ENCODE measurements at regions of chr12 and their contacts with region 1.

Region 1: DNA sequence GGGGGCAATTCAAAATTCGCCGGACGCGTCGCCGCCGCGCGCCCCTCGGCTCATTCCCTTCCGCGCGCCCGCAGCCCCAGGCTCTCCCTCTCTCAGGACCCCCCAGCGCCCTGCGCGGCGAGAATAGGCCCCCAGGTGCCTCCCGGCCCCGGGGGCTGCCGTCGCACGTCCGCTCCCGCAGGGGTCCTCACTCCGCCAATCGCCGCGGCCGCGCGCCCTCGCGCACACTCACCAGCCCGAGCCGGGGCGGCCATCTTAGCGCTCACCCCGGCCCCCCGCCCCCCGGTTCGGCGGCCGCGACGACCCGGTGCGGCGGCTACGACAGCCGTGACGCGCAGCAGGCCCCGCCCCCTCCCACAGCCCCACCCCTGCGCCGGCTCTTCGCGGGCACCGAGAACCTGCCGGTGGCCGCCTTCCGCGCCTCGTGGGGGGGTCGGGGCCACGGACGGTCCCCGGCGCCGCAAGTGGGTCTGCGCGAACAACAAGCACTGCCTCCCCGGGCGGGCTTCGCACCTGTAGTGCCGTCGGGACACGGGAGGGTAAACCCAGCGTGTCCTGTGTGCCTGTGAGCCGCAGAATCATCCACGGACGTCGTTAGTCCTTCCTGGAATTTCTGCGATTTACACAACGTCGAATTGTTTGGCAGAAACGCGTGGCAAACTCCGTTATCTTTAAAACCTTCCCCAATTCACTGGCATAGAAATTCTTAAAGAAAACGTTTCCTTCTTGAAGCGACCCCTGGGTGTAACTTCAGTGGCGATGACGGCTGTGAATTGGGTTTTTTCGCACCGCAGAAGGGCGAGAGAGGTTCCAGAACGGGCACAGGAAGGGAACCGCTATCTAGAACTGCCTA is 2.5 kb downstream of the USP44 start:
- DNase-seq: peak; percentile 87
- ATAC-seq: peak; percentile 91
- H3K4me3 ChIP-seq: peak overlapping the region; percentile 52 to 91 (median 81)
- H3K4me3 Mint-ChIP-seq: peak overlapping the region; percentile 92
- H3K27ac ChIP-seq: peak overlapping the region; percentile 73 to 78
- H3K27ac Mint-ChIP-seq: peak overlapping the region; percentile 85
- H3K4me1 ChIP-seq: peaks cover 12 to 13% of the 10 kb centered on the region in 2 donors
- H3K4me1 Mint-ChIP-seq: peaks cover 25% of the 10 kb centered on the region
- H3K27me3 ChIP-seq: peaks cover 0 to 7% (median 0%) of the 10 kb centered on the region in 4 experiments
- H3K27me3 Mint-ChIP-seq: peaks cover 6% of the 10 kb centered on the region
- CTCF ChIP-seq: no peak

Region 2: GRCh38 chr12:95473884-95474659 is 74.7 kb before region 1 on chr12 and contains the start of gene METAP2:
- CTCF ChIA-PET with region 1: no interaction called
- POLR2A ChIA-PET with region 1: no interaction called
- intact Hi-C with region 1: loop called (anchors 2 kb)
- DNase-seq: peak; percentile 92
- ATAC-seq: peak; percentile 97
- H3K4me3 ChIP-seq: peak within 1 kb of the TSS; percentile 71 to 98 (median 90)
- H3K4me3 Mint-ChIP-seq: peak within 1 kb of the TSS; percentile 100
- H3K27ac ChIP-seq: peak within 1 kb of the TSS; percentile 73 to 94
- H3K27ac Mint-ChIP-seq: peak within 1 kb of the TSS; percentile 99
- H3K4me1 ChIP-seq: peaks cover 16 to 17% of the 10 kb centered on the region in 2 donors
- H3K4me1 Mint-ChIP-seq: peaks cover 47% of the 10 kb centered on the region
- H3K27me3 ChIP-seq: no peaks in the 10 kb centered on the region
- H3K27me3 Mint-ChIP-seq: peaks cover 6% of the 10 kb centered on the region
- CTCF ChIP-seq: no peak
- total RNA-seq, gene METAP2: 49.9 and 64.5 TPM in 2 replicates